ENCODE measurements at regions of chr2 and their contacts with region 1.

Region 1: DNA sequence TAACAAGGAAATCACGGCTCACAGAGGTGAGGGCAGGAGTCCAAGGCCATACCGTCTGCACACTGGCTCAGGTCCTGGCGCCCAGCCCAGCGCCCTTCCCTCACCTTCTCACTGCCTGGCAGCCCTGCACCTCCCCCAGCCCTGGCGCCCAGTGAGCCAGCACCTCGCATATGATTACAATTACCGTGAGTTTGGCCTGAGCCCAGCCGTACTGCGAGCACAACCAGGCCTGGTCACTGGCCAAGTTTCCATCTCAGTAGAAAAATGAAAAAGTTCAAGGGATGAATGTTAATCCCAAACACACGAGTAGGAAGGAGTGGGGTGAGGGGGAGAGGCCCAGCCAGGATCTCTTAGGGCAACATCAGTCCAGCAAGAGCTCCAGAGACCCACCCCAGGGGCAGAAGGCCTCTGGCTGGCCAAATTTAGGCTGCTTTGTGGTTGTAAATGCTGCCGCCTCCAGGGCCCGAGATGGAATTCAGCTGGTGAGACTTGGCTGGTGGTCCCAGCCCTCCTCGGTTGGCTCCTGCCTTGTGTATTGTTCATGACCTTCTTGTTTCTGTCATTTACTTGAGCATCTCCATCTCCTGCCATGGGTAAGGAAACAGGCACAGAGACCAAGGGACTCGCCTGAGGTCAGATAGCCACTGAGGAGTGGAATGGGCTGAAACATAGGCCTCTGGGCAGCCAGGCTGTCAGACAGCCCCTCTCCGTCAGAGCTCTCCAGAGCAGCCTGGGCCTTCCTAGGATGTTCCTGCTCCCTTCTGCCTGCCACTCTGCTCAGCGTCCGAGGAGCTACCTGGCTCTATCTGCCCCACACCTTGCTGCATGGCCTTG is 68.2 kb downstream of the MCFD2 start:
- DNase-seq: peak; percentile 93
- ATAC-seq: peak; percentile 78

Region 2: DNA sequence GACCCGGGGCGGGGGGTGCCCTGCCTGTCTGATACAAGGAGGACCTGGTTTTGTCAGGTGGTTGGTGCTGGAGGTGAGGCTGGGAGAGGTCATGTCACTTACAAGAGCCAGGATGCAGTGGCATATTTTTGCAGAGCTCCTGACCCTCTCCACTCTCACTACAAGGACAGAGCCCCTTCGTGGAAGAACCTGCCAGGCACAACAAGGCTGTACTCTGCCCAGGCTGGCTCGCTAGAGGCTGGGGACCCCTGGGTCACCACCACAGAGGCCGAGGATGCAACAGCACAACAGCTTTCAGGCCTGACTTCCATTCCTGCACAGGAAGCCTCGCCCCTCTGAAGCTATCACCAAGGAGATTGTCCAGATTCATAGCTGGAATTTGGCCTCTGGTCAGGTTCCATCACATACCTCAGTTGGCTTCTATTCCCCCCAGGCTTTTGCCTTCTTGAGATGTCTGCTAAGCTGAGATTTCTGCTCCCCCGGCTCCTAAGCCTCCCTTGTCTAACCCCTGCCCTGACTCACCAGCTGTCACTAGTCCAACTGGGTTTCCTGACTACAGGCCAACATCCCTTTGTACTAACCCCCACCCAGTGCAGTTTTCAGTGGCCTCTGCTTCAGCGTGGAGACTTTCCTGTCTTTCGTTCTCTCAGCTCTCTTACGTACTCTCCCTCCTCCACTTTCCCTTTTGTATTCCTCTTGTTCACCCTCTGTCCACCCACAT is 682.7 kb before region 1 on chr2:
- intact Hi-C with region 1: no loop called
- DNase-seq: no peak
- ATAC-seq: peak; percentile 92

Region 3: GRCh38 chr2:46275973-46276372 is 571.5 kb before region 1 on chr2:
- intact Hi-C with region 1: no loop called
- DNase-seq: peak; percentile 80
- ATAC-seq: peak; percentile 71

Region 4: GRCh38 chr2:46812361-46813024 is 35.0 kb before region 1 on chr2:
- intact Hi-C with region 1: loop called (anchors 1 kb)
- DNase-seq: peak; percentile 79
- ATAC-seq: peak; percentile 39

Region 5: GRCh38 chr2:46818121-46818888 is 29.1 kb before region 1 on chr2:
- intact Hi-C with region 1: loop called (anchors 1 kb)
- DNase-seq: peak; percentile 92
- ATAC-seq: peak; percentile 92